H1 (cell line): ENCODE measurements at regions of chr7 and their contacts with region 1.

Region 1: DNA sequence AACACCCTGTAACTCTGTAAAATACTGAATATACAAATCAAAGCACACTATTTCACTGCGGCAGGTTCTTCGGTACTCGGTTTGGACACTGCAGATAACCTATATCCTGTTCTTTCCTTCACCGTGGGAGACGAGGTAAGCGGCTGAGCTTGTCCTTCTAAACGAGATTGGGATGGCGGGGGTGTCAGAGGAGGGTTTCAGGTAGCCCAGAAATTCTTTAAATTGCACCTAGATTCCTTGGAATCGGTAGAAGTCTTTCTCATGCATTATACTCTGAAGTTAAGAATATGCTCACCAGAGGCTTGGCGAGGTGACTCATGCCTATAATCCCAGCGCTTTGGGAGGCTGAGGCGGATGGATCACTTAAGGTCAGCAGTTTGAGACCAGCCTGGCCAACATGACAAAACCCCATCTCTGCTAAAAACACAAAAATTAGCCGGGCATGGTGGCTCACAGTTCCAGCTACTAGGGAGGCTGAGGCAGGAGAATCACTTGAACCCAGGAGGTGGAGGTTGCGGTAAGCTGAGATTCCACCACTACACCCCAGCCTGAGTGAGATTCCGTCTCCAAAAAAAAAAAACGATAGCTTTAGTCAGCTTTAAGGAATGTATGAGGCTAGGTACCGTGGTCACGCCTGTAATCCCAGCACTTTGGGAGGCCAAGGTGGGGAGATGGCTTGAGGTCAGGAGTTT is 10.1 kb upstream of the LAT2 start:
- DNase-seq: no peak
- H3K4me3 ChIP-seq: no peak overlapping the region
- H3K27ac ChIP-seq: no peak overlapping the region
- H3K4me1 ChIP-seq: no peaks in the 10 kb centered on the region
- H3K27me3 ChIP-seq: no peaks in the 10 kb centered on the region
- CTCF ChIP-seq: no peak
- EP300 ChIP-seq: no peak
- POLR2A ChIP-seq: no peak
- RAD21 ChIP-seq: no peak

Region 2: DNA sequence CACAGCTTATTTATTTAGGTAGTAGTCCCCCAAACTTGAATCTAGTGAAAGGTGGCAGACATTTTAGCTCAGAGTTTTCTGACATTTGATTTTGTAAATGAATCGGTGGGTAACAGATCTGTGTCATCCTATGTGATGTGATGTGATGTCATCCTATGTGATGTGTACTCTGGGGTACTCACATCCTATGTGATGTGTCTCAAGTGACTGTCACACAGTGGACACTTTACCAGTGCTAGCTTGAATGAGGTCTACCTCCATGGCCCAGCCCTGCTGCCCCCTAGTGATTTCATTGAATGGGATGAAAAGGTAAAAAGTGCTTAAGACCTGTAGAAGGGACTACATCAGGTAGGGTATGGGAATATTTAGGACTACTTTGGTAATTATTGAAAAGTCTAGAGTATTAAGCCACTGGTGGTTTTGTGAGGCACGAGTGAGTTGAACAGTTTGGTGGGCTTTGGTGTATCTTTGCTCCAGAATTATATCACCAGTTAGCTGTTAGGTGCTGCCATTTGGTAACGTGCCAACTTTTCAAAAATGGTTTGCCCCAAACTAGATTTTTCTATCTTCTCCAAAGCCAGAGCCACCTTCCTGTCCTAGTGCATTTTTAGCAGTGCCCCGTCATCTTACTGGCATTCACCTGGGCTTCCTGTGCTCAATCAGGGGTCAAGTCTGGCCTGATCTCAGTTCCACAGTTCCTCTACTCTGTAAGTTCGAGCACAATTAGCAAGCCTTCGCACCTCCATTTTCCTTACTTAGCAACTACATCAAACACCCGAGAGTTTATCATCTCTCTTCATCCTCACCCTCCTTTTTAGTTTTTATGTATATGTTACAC is 15.9 kb before region 1 on chr7:
- CTCF ChIA-PET with region 1: interaction called, 24 read pairs
- POLR2A ChIA-PET with region 1: interaction called, 18 read pairs
- DNase-seq: no peak
- H3K4me3 ChIP-seq: no peak overlapping the region
- H3K27ac ChIP-seq: no peak overlapping the region
- H3K4me1 ChIP-seq: peaks cover 0 to 6% (median 2%) of the 10 kb centered on the region in 4 experiments; a peak in 4 of 7 replicates
- H3K27me3 ChIP-seq: no peaks in the 10 kb centered on the region
- CTCF ChIP-seq: peak; percentile 28 to 53 (median 51)
- EP300 ChIP-seq: no peak
- POLR2A ChIP-seq: no peak
- RAD21 ChIP-seq: peak; percentile 45 to 58; a peak in 3 of 4 replicates

Region 3: GRCh38 chr7:74294191-74294998 is 94.7 kb after region 1 on chr7:
- CTCF ChIA-PET with region 1: no interaction called
- POLR2A ChIA-PET with region 1: no interaction called
- DNase-seq: no peak
- H3K4me3 ChIP-seq: no peak overlapping the region
- H3K27ac ChIP-seq: no peak overlapping the region; the same call in 1 of the 2 replicates
- H3K4me1 ChIP-seq: peaks cover 9 to 34% (median 25%) of the 10 kb centered on the region in 4 experiments
- H3K27me3 ChIP-seq: no peaks in the 10 kb centered on the region
- CTCF ChIP-seq: no peak
- EP300 ChIP-seq: no peak
- POLR2A ChIP-seq: no peak
- RAD21 ChIP-seq: no peak